ENCODE measurements at regions of chr1 and their contacts with region 1.

Region 1: DNA sequence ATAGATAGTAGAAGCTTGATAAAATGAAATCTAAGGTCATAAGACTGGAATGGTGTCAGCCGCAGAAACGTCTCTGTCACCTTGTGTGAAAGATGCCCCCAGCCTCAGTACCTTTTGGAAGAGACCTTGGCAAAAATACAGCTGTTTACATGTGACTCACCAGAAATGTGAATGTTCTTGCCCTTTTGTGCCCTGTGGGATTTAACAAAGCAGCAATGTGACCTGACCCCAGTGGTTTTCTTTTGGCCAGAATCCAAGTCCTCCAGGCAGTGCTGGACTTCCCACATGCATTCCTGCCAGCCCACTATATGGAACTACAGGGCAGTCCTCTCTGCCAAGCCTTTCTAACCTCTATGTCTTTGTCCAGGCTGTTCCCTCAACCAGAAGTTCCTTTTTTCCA is 27.2 kb upstream of the LRRC8C start:
- DNase-seq: no peak
- ATAC-seq: no peak
- H3K4me3 Mint-ChIP-seq: peak overlapping the region; percentile 62
- H3K27ac Mint-ChIP-seq: peak overlapping the region; percentile 99
- H3K4me1 Mint-ChIP-seq: peaks cover 92% of the 10 kb centered on the region
- H3K27me3 Mint-ChIP-seq: no peaks in the 10 kb centered on the region

Region 2: GRCh38 chr1:89047734-89048133 is 558.0 kb before region 1 on chr1:
- CTCF ChIA-PET with region 1: no interaction called
- POLR2A ChIA-PET with region 1: no interaction called
- intact Hi-C with region 1: loop called in 1 of 2 experiments (anchors 5 kb)
- DNase-seq: no peak
- ATAC-seq: no peak
- H3K4me3 Mint-ChIP-seq: no peak overlapping the region
- H3K27ac Mint-ChIP-seq: no peak overlapping the region
- H3K4me1 Mint-ChIP-seq: peaks cover 7% of the 10 kb centered on the region
- H3K27me3 Mint-ChIP-seq: no peaks in the 10 kb centered on the region

Region 3: GRCh38 chr1:89483010-89483756 is 122.5 kb before region 1 on chr1:
- CTCF ChIA-PET with region 1: interaction called, 30 read pairs
- POLR2A ChIA-PET with region 1: no interaction called
- intact Hi-C with region 1: loop called in 1 of 2 experiments (anchors 5 kb)
- DNase-seq: peak; percentile 91
- ATAC-seq: peak; percentile 86
- H3K4me3 Mint-ChIP-seq: no peak overlapping the region
- H3K27ac Mint-ChIP-seq: no peak overlapping the region
- H3K4me1 Mint-ChIP-seq: peaks cover 21% of the 10 kb centered on the region
- H3K27me3 Mint-ChIP-seq: no peaks in the 10 kb centered on the region

Region 4: DNA sequence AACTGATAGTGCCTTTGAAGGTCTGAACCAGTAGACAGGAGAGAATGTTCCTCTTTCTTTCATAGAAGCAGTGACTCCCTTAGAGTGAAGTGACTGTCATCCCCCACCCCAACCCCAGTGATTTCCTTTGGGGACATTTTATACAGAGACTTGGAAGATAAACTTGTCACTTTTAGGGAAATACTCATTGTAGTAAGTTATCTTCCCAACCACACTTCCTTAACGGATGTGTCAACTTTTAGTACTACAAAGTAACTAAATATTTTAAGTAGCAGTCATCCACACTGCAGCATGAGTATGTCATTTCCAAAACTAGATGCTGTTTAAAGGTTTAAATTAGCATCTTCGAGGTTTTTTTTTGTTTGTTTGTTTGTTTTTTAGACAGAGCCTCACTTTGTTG is 67.3 kb before region 1 on chr1:
- CTCF ChIA-PET with region 1: interaction called, 5 read pairs
- POLR2A ChIA-PET with region 1: interaction called, 13 read pairs
- intact Hi-C with region 1: no loop called
- DNase-seq: peak; percentile 31
- ATAC-seq: peak; percentile 27
- H3K4me3 Mint-ChIP-seq: no peak overlapping the region
- H3K27ac Mint-ChIP-seq: peak overlapping the region; percentile 88
- H3K4me1 Mint-ChIP-seq: peaks cover 90% of the 10 kb centered on the region
- H3K27me3 Mint-ChIP-seq: no peaks in the 10 kb centered on the region

Region 5: GRCh38 chr1:89615676-89616598 is 10.2 kb after region 1 on chr1:
- CTCF ChIA-PET with region 1: interaction called, 16 read pairs
- POLR2A ChIA-PET with region 1: interaction called, 24 read pairs
- intact Hi-C with region 1: loop called in 1 of 2 experiments (anchors 1 kb)
- DNase-seq: peak; percentile 46
- ATAC-seq: no peak
- H3K4me3 Mint-ChIP-seq: no peak overlapping the region
- H3K27ac Mint-ChIP-seq: no peak overlapping the region
- H3K4me1 Mint-ChIP-seq: peaks cover 86% of the 10 kb centered on the region
- H3K27me3 Mint-ChIP-seq: no peaks in the 10 kb centered on the region

Region 6: GRCh38 chr1:89780721-89781120 is 175.0 kb after region 1 on chr1:
- CTCF ChIA-PET with region 1: interaction called, 5 read pairs
- POLR2A ChIA-PET with region 1: interaction called, 12 read pairs
- intact Hi-C with region 1: no loop called
- DNase-seq: peak; percentile 59
- ATAC-seq: peak; percentile 73
- H3K4me3 Mint-ChIP-seq: peak overlapping the region; percentile 48
- H3K27ac Mint-ChIP-seq: peak overlapping the region; percentile 86
- H3K4me1 Mint-ChIP-seq: peaks cover 44% of the 10 kb centered on the region
- H3K27me3 Mint-ChIP-seq: no peaks in the 10 kb centered on the region

Region 7: GRCh38 chr1:90007979-90008404 is 402.3 kb after region 1 on chr1:
- CTCF ChIA-PET with region 1: no interaction called
- POLR2A ChIA-PET with region 1: no interaction called
- intact Hi-C with region 1: no loop called
- DNase-seq: no peak
- ATAC-seq: no peak
- H3K4me3 Mint-ChIP-seq: no peak overlapping the region
- H3K27ac Mint-ChIP-seq: no peak overlapping the region
- H3K4me1 Mint-ChIP-seq: peaks cover 11% of the 10 kb centered on the region
- H3K27me3 Mint-ChIP-seq: no peaks in the 10 kb centered on the region